Endothelial cell of umbilical vein (primary cell): ENCODE measurements at regions of chr11 and their contacts with region 1.

Region 1: GRCh38 chr11:124673333-124674167 is at the starts of genes SIAE and SPA17:
- DNase-seq: peak; percentile 97
- H3K4me3 ChIP-seq: peak within 1 kb of the TSS; percentile 65 to 95 (median 65)
- H3K27ac ChIP-seq: peak within 1 kb of the TSS; percentile 63
- H3K4me1 ChIP-seq: peaks cover 26% of the 10 kb centered on the region
- H3K27me3 ChIP-seq: no peaks in the 10 kb centered on the region
- CTCF ChIP-seq: no peak
- POLR2A ChIP-seq: peak; percentile 96
- total RNA-seq, gene SIAE: 15.1 and 16.9 TPM in 2 replicates
- total RNA-seq, gene SPA17: 4.7 and 6.1 TPM in 2 replicates

Region 2: DNA sequence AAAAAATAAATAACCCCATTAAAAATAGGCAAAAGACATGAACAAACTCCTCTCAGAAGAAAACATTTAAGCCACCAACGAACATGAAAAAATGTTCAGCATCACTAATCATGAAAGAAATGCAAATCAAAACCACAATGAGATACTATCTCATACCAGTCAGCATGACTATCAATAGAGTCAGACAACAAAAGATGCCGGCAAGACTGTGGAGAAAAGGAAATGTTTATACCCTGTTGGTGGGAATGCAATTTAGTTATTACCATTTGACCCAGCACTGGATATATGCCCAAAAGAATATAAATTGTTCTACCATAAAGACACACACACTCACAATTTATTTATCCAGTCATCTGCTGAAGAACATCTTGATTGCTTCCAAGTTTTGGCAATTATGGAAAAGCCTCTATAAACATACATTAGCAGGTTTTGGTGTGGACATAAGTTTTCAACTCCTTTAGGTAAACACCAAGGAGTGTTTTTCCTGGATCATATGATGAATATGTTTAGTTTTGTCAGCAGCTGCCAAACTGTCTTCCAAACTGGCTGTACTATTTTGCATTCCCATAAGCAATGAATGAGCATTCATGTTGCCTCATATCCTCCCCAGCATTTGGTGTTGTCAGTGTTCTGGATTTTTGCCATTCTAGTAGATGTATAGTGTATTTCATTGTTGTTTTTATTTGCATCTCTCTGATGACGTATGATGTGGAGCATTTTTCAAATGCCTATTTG is 387.8 kb before region 1 on chr11:
- CTCF ChIA-PET with region 1: no interaction called
- POLR2A ChIA-PET with region 1: no interaction called
- dilution Hi-C with region 1: no loop called
- intact Hi-C with region 1: no loop called
- DNase-seq: peak; percentile 73
- H3K4me3 ChIP-seq: no peak overlapping the region
- H3K27ac ChIP-seq: peak overlapping the region; percentile 55
- H3K4me1 ChIP-seq: peaks cover 10% of the 10 kb centered on the region
- H3K27me3 ChIP-seq: peaks cover 0 to 2% of the 10 kb centered on the region in 2 experiments
- CTCF ChIP-seq: no peak
- POLR2A ChIP-seq: peak; percentile 38

Region 3: DNA sequence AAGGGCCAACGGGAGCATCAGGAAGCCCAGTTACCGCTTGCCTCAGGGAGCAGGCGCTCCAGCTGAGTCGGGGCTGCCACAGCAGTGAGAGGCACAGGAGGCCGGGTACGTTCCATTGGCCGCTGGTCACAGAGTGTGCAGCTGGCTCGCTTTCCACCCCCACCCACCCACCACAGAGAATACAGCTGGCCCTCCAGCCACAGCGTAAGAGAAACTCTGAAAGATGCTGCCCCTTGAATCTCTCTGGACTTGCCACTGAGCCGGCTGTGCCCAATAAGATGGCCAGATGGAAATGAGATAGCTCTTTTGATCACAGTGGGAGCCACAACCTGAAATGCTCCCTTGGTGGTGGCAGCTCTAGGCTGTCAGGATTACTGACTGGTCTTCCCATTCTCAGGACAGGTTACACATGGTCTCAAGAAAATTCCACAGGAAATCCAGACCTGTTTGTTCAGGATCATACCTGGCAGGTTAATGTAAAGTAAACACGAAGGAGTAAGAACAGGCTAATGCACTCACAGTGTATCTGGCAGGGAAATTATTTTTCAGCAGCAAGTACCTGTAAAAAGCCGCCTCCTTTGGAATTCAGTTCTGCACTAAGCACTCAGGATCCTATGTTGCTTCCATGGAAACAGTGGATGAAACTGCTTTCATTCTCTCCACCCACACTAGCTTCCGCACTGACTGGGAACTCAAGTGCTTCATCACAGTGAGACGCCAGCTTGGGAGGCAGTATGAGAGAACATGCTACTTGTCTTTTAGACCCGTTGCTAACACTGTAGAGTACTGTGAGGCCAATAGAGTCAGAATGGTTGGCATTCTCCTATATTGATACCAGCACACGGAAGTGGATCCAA is 16.5 kb before region 1 on chr11:
- CTCF ChIA-PET with region 1: interaction called, 11 read pairs
- POLR2A ChIA-PET with region 1: no interaction called
- dilution Hi-C with region 1: no loop called
- intact Hi-C with region 1: no loop called
- DNase-seq: no peak
- H3K4me3 ChIP-seq: no peak overlapping the region
- H3K27ac ChIP-seq: no peak overlapping the region
- H3K4me1 ChIP-seq: no peaks in the 10 kb centered on the region
- H3K27me3 ChIP-seq: no peaks in the 10 kb centered on the region
- CTCF ChIP-seq: no peak
- POLR2A ChIP-seq: no peak

Region 4: DNA sequence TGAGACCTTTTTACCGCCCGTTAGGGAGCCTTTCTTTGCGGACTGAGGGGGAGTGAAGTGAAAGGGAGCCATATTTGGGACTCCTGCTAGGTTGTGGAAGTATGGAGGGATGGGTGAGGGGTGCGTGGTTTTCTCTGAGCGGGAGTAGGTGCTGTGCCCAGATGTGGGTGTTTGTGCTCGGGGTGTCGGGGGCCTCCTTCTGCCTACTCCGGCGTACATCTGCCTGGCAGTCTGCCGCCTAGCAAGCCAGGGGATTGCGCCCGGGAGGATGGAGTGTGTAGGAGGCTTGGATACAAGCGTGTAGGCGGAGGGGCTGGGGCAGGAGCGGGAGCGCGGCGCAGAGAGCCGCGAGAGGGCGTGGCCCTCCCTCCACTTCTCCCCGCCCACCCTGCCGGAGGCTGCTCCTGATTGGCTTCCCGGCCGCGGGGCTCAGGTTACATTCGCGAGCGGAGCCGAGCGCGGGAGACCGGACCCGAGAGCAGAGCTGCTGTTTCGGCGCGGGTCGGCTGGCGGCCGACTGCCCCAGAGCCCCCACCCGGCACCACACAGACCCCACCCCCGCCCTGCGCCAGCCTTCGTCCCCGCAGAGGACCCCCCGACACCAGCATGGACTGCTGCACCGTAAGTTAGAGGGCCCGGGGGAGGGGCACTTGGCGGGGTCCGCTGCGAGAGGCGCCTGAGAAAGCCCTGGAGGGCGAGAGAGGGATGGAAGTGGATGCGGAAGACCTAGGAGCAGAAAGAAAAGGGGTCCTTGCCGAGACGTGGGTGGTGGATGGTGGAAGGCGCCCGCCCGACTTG is 66.1 kb after region 1 on chr11 and contains the start of gene NRGN:
- CTCF ChIA-PET with region 1: interaction called, 267 read pairs
- POLR2A ChIA-PET with region 1: interaction called, 4 read pairs
- dilution Hi-C with region 1: no loop called
- intact Hi-C with region 1: loop called (anchors 1 kb)
- DNase-seq: peak; percentile 92
- H3K4me3 ChIP-seq: peak within 1 kb of the TSS; percentile 63 to 80 (median 69)
- H3K27ac ChIP-seq: no peak within 1 kb of the TSS
- H3K4me1 ChIP-seq: peaks cover 13% of the 10 kb centered on the region
- H3K27me3 ChIP-seq: peaks cover 3 to 5% of the 10 kb centered on the region in 2 experiments
- CTCF ChIP-seq: no peak
- POLR2A ChIP-seq: peak; percentile 53
- total RNA-seq, gene NRGN: 30.9 and 33.5 TPM in 2 replicates

Region 5: GRCh38 chr11:124758317-124759203 is 85.0 kb after region 1 on chr11:
- CTCF ChIA-PET with region 1: interaction called, 105 read pairs
- POLR2A ChIA-PET with region 1: interaction called, 4 read pairs
- dilution Hi-C with region 1: no loop called
- intact Hi-C with region 1: loop called (anchors 1 kb)
- DNase-seq: peak; percentile 81
- H3K4me3 ChIP-seq: peak overlapping the region; percentile 23 to 65 (median 36)
- H3K27ac ChIP-seq: peak overlapping the region; percentile 97
- H3K4me1 ChIP-seq: peaks cover 65% of the 10 kb centered on the region
- H3K27me3 ChIP-seq: no peaks in the 10 kb centered on the region
- CTCF ChIP-seq: peak; percentile 73 to 91
- POLR2A ChIP-seq: peak; percentile 42

Region 6: GRCh38 chr11:124793466-124794278 is 120.1 kb after region 1 on chr11:
- CTCF ChIA-PET with region 1: interaction called, 74 read pairs
- POLR2A ChIA-PET with region 1: no interaction called
- dilution Hi-C with region 1: no loop called
- intact Hi-C with region 1: loop called (anchors 1 kb)
- DNase-seq: peak; percentile 70
- H3K4me3 ChIP-seq: no peak overlapping the region
- H3K27ac ChIP-seq: no peak overlapping the region
- H3K4me1 ChIP-seq: peaks cover 9% of the 10 kb centered on the region
- H3K27me3 ChIP-seq: no peaks in the 10 kb centered on the region
- CTCF ChIP-seq: peak; percentile 64
- POLR2A ChIP-seq: no peak